CD8-positive, alpha-beta T cell (primary cell): ENCODE measurements at regions of chr15 and their contacts with region 1.

Region 1: GRCh38 chr15:84633311-84634227 is 20.5 kb downstream of the WDR73 start:
- DNase-seq: peak; percentile 29 to 84 (median 63)
- ATAC-seq: peak; percentile 41
- H3K4me3 ChIP-seq: peak overlapping the region; percentile 63 to 77
- H3K4me3 Mint-ChIP-seq: peak overlapping the region; percentile 93
- H3K27ac ChIP-seq: peak overlapping the region; percentile 51 to 74
- H3K27ac Mint-ChIP-seq: peak overlapping the region; percentile 96
- H3K4me1 ChIP-seq: peaks cover 33% of the 10 kb centered on the region
- H3K4me1 Mint-ChIP-seq: peaks cover 50% of the 10 kb centered on the region
- H3K27me3 ChIP-seq: no peaks in the 10 kb centered on the region
- H3K27me3 Mint-ChIP-seq: no peaks in the 10 kb centered on the region
- CTCF ChIP-seq: no peak

Region 2: GRCh38 chr15:84600851-84601838 is 32.4 kb before region 1 on chr15 and contains the start of gene ZSCAN2:
- CTCF ChIA-PET with region 1: interaction called, 19 read pairs
- POLR2A ChIA-PET with region 1: interaction called, 17 read pairs
- intact Hi-C with region 1: loop called (anchors 1 kb)
- DNase-seq: peak; percentile 81 to 95 (median 92)
- ATAC-seq: peak; percentile 95
- H3K4me3 ChIP-seq: peak within 1 kb of the TSS; percentile 93 to 100
- H3K4me3 Mint-ChIP-seq: peak within 1 kb of the TSS; percentile 99
- H3K27ac ChIP-seq: peak within 1 kb of the TSS; percentile 34 to 58
- H3K27ac Mint-ChIP-seq: peak within 1 kb of the TSS; percentile 93
- H3K4me1 ChIP-seq: peaks cover 42% of the 10 kb centered on the region
- H3K4me1 Mint-ChIP-seq: peaks cover 74% of the 10 kb centered on the region
- H3K27me3 ChIP-seq: no peaks in the 10 kb centered on the region
- H3K27me3 Mint-ChIP-seq: no peaks in the 10 kb centered on the region
- CTCF ChIP-seq: no peak
- total RNA-seq, gene ZSCAN2: 2.7 to 4.4 TPM

Region 3: DNA sequence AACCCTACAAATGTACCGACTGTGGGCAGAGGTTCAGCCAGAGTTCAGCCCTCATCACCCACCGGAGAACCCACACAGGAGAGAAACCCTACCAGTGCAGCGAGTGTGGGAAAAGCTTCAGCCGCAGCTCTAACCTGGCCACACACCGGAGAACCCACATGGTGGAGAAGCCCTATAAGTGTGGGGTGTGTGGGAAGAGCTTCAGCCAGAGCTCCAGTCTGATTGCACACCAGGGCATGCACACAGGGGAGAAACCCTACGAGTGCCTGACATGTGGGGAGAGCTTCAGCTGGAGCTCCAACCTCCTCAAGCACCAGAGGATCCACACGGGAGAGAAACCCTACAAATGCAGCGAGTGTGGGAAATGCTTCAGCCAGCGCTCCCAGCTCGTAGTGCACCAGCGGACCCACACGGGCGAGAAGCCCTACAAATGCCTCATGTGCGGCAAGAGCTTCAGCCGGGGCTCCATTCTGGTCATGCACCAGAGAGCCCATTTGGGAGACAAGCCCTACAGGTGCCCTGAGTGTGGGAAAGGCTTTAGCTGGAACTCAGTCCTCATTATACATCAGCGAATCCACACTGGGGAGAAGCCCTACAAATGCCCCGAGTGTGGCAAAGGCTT is 12.1 kb before region 1 on chr15:
- CTCF ChIA-PET with region 1: interaction called, 4 read pairs
- POLR2A ChIA-PET with region 1: interaction called, 18 read pairs
- intact Hi-C with region 1: no loop called
- DNase-seq: no peak
- ATAC-seq: no peak
- H3K4me3 ChIP-seq: no peak overlapping the region
- H3K4me3 Mint-ChIP-seq: no peak overlapping the region
- H3K27ac ChIP-seq: no peak overlapping the region
- H3K27ac Mint-ChIP-seq: no peak overlapping the region
- H3K4me1 ChIP-seq: no peaks in the 10 kb centered on the region
- H3K4me1 Mint-ChIP-seq: no peaks in the 10 kb centered on the region
- H3K27me3 ChIP-seq: no peaks in the 10 kb centered on the region
- H3K27me3 Mint-ChIP-seq: no peaks in the 10 kb centered on the region
- CTCF ChIP-seq: no peak

Region 4: GRCh38 chr15:84648539-84648938 is 15.0 kb after region 1 on chr15:
- CTCF ChIA-PET with region 1: interaction called, 9 read pairs
- POLR2A ChIA-PET with region 1: interaction called, 20 read pairs
- intact Hi-C with region 1: no loop called
- DNase-seq: no peak
- ATAC-seq: no peak
- H3K4me3 ChIP-seq: no peak overlapping the region
- H3K4me3 Mint-ChIP-seq: no peak overlapping the region
- H3K27ac ChIP-seq: peak overlapping the region in 1 of 2 experiments; percentile 12
- H3K27ac Mint-ChIP-seq: no peak overlapping the region
- H3K4me1 ChIP-seq: peaks cover 15% of the 10 kb centered on the region
- H3K4me1 Mint-ChIP-seq: peaks cover 18% of the 10 kb centered on the region
- H3K27me3 ChIP-seq: no peaks in the 10 kb centered on the region
- H3K27me3 Mint-ChIP-seq: no peaks in the 10 kb centered on the region
- CTCF ChIP-seq: no peak

Region 5: DNA sequence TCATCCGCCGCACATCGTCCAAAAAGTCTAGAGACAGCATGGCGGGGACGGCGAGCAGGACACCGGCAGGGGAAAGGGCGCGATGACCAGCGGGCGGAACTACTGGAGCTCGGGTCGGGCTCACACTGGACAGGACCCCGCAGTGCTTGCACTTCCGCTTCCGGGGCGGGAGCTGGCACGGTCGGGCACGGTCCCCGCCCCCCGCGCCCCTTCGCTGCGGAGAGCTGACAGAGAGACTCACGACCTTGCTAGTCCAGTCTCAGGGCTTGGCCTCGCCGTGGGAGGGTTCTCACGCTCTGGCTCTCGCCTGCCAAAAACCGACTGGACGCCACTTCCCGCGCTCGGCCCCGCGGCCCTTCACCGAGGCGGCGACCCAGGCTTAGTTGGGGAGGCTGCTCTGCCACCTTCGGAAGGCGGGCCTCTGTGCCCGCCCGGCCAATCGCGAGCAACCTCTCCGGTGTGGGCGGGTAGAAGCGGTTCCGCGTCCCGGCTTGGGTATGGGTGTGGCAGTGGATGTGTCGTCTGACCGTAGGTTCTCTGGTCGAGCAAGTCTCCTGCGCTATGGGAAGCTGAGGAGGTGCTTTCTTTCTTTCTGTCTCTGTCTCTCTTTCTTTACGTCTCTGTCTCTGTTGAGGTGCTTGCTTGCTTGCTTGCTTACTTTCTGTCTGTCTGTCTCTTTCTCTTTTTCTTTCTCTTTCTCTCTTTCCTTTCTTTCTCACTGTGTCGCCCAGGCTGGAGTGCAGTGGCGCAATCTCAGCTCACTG is 82.6 kb after region 1 on chr15 and contains the start of gene SEC11A:
- CTCF ChIA-PET with region 1: interaction called, 3 read pairs
- POLR2A ChIA-PET with region 1: interaction called, 9 read pairs
- intact Hi-C with region 1: loop called (anchors 1 kb)
- DNase-seq: peak; percentile 84 to 95 (median 90)
- ATAC-seq: peak; percentile 94
- H3K4me3 ChIP-seq: peak within 1 kb of the TSS; percentile 94 to 98
- H3K4me3 Mint-ChIP-seq: peak within 1 kb of the TSS; percentile 96
- H3K27ac ChIP-seq: peak within 1 kb of the TSS; percentile 74 to 86
- H3K27ac Mint-ChIP-seq: peak within 1 kb of the TSS; percentile 97
- H3K4me1 ChIP-seq: peaks cover 37% of the 10 kb centered on the region
- H3K4me1 Mint-ChIP-seq: peaks cover 44% of the 10 kb centered on the region
- H3K27me3 ChIP-seq: no peaks in the 10 kb centered on the region
- H3K27me3 Mint-ChIP-seq: no peaks in the 10 kb centered on the region
- CTCF ChIP-seq: no peak
- total RNA-seq, gene SEC11A: 36.4 to 38.5 TPM